ENCODE measurements at regions of chr12 and their contacts with region 1.

Region 1: DNA sequence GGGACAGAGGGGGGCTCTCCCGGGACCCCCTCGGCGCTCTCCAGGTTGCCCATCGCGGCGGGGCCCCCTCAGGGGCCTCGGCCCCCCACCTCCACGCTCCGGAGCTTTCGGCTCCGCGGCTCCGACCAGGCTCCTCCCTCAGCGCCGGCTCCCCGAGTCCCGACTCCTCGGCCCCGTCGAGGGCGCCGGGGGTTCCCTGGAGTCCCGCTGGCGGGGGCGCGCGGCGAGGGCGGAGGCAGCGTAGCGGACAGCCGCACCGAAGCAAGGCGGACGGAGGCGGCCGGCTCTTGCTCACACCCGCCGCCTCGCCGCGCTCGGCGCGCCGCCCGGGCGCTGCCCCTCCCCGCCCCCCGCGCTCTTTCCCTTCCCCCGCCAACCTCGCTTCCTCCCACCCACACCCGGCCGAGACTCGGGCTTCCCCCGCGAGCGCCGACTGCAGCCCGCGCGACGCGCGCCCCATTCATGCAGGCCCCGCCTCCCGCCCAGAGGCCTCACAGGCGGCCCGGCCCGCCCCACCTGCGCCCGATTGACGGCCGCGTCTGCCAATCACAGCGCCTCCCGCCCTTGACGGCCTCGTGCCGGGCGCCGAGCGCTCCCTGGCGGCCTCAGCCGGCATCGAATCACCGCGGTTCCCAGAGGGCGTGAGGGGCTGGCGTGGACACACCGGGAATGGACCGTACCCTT is at the start of gene FMNL3:
- DNase-seq: peak; percentile 98 to 99 (median 98)
- ATAC-seq: peak; percentile 99 to 100 (median 100)
- H3K4me3 ChIP-seq: peak within 1 kb of the TSS; percentile 52 to 68 (median 63)
- H3K27ac ChIP-seq: peak within 1 kb of the TSS; percentile 60 to 88 (median 72)
- H3K4me1 ChIP-seq: no peaks in the 10 kb centered on the region
- H3K27me3 ChIP-seq: no peaks in the 10 kb centered on the region
- CTCF ChIP-seq: peak; percentile 91 to 98 (median 94)
- POLR2A ChIP-seq: no peak
- total RNA-seq, gene FMNL3: 2.1 to 4.9 (median 2.9) TPM

Region 2: DNA sequence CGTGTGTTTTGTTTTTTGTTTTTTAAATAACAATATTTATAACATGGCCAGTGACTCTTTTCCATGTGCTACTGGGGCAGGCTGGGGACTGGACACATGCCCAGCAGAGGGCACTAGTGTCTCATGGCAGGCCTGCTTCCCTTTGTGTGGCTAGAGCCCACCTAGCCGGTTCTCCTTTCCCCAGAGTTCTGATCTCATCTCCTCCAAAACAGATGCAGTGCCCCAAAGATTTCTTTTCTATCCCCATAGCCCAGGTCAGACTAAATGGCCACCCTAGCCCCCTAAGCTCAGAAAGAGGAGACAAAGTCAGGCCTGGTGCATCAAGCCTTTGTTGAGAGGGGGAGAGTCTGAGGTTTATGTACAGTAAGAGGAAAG is 62.7 kb before region 1 on chr12:
- intact Hi-C with region 1: loop called (anchors 5 kb)
- DNase-seq: peak; percentile 72 to 81 (median 74)
- ATAC-seq: peak; percentile 78 to 88 (median 82)
- H3K4me3 ChIP-seq: no peak overlapping the region
- H3K27ac ChIP-seq: no peak overlapping the region
- H3K4me1 ChIP-seq: peaks cover 0 to 12% (median 6%) of the 10 kb centered on the region in 4 donors
- H3K27me3 ChIP-seq: no peaks in the 10 kb centered on the region
- CTCF ChIP-seq: peak; percentile 77 to 94 (median 86)
- POLR2A ChIP-seq: no peak

Region 3: DNA sequence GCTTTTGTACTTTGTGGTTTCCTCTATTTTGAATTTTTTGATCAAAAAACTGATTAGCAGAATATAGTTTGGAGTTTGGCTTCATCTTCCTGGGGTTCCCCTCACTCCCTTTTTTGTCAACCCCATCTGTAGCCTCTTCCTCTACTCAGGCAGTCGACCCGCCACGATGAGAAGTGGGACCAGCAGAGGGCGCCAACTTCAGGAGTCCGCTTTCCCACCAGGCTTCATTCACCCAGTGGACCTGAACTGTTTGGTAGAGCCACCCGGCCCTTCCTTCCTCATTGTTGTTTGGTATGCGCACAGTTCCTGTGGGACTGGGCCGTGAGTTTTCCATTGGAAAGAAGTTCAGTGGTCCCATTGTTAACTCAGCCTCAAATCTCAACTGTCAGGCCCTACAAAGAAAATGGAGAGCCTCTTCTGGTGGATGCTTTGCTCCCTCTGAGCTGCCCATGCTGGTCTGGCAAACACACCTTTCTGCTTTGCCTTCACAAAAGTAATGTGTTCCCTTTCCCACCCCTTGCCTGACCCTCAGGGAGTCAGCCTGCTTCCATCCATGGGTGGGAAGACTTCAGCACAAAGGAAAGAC is 55.8 kb after region 1 on chr12:
- intact Hi-C with region 1: no loop called
- DNase-seq: peak; percentile 51 to 69 (median 68)
- ATAC-seq: peak; percentile 58 to 73 (median 66)
- H3K4me3 ChIP-seq: no peak overlapping the region
- H3K27ac ChIP-seq: no peak overlapping the region
- H3K4me1 ChIP-seq: no peaks in the 10 kb centered on the region
- H3K27me3 ChIP-seq: no peaks in the 10 kb centered on the region
- CTCF ChIP-seq: peak; percentile 38 to 69 (median 59)
- POLR2A ChIP-seq: no peak

Measured in right lobe of liver (tissue), 6 donors.